Heart right ventricle (tissue), 16 donors: ENCODE measurements at regions of chr1 and their contacts with region 1.

Region 1: DNA sequence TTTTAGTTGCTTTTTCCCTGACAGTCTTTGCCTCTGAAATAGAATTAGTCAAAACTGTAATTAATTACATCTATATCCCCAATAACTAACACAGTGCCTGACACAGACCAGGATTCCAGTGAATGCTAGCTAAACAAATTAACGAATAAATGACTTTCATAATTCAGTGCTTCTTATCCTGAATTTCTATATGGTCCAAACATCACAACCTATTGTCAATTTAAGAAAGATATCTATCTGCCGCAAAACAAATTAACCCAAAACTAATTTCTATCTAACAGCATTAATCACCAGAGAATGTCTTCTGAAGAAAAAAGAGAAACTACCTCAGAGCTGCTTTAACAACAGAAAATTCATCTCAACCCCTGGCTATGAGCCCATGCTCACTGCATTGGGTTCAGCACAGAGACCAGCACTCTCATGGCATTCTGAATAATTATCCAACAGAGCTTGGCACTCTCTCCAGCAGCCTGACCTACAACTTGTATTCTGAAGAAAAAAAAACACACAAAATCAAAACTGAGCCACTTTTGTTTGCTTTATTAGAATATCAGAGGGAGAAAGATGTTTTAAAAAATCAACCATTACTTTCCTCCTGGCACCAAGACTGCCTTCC is 547.3 kb upstream of the BEND5 start:
- DNase-seq: no peak
- ATAC-seq: no peak
- H3K4me3 ChIP-seq: no peak overlapping the region
- H3K27ac ChIP-seq: no peak overlapping the region
- H3K4me1 ChIP-seq: no peaks in the 10 kb centered on the region
- H3K27me3 ChIP-seq: no peaks in the 10 kb centered on the region
- CTCF ChIP-seq: no peak

Region 2: GRCh38 chr1:47578026-47578720 is 1745.9 kb before region 1 on chr1:
- intact Hi-C with region 1: no loop called
- DNase-seq: peak; percentile 34 to 39
- ATAC-seq: peak; percentile 66 to 86 (median 79)
- H3K4me3 ChIP-seq: no peak overlapping the region
- H3K27ac ChIP-seq: peak overlapping the region in 8 of 10 donors; percentile 3 to 70 (median 58)
- H3K4me1 ChIP-seq: peaks cover 0 to 21% (median 15%) of the 10 kb centered on the region in 9 donors
- H3K27me3 ChIP-seq: peaks cover 0 to 72% (median 5%) of the 10 kb centered on the region in 7 donors
- CTCF ChIP-seq: no peak

Region 3: DNA sequence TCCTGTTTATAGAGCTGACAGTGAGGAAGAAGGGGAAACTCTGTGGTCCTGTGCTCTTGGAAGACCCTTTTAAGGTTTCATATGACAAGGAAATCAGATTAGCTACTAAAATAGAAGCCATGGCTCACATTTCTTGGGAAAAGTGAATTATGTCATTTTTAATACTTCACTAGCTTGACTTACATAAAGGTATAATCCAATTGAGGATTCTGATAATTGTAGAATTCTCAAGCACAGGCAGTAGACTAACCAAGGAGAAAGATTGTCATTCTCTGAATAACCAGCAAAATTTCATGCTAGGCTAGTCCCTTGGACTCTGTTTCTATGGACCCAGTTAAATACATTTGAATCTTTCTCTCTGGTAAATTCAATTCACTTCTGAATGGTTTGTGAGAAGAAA is 65.7 kb after region 1 on chr1:
- intact Hi-C with region 1: no loop called
- DNase-seq: no peak
- ATAC-seq: no peak
- H3K4me3 ChIP-seq: no peak overlapping the region
- H3K27ac ChIP-seq: no peak overlapping the region
- H3K4me1 ChIP-seq: no peaks in the 10 kb centered on the region
- H3K27me3 ChIP-seq: no peaks in the 10 kb centered on the region
- CTCF ChIP-seq: no peak

Region 4: GRCh38 chr1:49448200-49448599 is 124.2 kb after region 1 on chr1:
- intact Hi-C with region 1: loop called in 1 of 10 experiments (anchors 5 kb)
- DNase-seq: no peak
- ATAC-seq: no peak
- H3K4me3 ChIP-seq: no peak overlapping the region
- H3K27ac ChIP-seq: no peak overlapping the region
- H3K4me1 ChIP-seq: no peaks in the 10 kb centered on the region
- H3K27me3 ChIP-seq: no peaks in the 10 kb centered on the region
- CTCF ChIP-seq: no peak